ENCODE measurements at regions of chr9 and their contacts with region 1.

Region 1: DNA sequence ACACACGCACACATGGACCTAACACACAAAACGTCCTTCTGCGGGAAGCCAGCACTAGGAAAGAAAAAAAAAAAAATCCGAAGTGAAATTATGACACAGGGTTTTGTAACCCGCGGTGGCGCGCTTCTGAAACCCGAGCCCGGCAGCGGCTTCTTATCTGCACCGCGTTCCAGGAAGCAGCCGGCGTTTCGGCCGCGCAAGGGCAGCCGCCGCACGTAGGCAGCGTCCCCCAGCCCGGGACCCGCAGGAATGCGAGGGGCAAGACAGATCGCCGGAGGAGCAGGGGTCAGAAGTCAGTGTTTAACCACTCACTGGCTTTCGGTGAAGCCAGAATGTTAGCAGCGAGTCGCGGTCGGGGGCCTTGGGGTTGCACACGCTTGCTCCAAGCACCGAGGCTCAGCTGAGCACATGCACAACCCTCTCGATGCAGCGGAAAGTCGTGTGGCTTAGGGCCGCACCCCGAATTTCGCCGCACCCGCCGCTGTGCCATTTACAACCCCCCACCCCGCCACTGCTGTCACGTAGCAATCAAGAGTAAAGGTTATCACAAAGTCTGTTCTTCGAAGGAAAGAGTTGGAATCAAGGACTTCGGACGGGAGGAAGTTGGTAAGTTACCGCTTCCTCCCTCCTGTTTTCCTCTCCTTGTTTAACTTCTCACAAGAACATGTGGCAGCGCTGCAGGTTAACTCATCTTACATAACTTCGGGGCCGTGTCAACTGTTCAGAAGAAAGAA is 167.9 kb downstream of the AUH start:
- DNase-seq: peak; percentile 77
- H3K4me3 Mint-ChIP-seq: peak overlapping the region; percentile 71
- H3K27ac Mint-ChIP-seq: peak overlapping the region; percentile 95
- H3K4me1 Mint-ChIP-seq: peaks cover 80% of the 10 kb centered on the region
- H3K27me3 Mint-ChIP-seq: no peaks in the 10 kb centered on the region

Region 2: DNA sequence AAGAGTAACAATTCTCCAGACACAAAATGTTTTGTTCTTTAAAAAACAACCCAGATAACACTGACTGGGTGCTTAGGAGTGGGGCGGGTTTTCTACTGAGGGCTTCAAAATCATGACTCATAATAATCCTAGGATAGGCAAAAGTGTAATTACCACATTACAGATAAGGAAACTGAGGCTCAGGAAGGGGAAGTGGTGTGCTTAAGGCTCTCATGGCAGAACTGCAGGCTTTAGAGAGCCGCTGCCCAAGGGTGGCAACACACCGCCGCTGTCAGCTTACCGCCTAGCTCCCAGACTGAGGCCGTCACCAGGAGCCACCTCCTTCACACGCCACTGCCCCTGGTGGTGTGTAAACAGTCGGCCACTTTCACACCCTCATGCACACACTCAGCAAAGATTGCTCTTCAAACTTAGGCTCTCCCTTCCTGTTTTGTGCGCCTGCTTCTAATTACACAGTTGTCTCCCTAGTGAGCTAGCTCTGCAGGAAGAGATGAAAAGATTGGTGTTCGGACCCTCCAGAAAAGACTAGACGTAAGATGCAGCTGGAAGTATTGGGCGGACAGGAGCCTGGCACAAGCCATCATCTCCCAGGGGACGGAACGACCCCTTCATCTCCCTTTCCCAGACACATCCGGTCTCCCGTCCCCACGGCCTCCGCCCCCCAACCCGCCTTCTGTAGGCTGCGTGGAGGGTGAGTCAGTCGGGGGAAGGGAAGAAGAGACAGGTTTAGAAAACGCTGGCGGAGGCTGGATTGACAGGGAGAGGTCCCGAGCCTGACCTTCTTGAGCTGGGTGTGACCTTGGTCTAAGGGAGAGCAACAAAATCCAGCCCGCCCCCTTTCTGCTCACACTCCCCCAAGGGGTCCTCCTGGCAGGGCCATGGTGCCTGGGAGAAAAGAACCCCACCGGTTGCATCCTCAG is 229.5 kb before region 1 on chr9:
- intact Hi-C with region 1: loop called (anchors 1 kb)
- DNase-seq: no peak
- H3K4me3 Mint-ChIP-seq: no peak overlapping the region
- H3K27ac Mint-ChIP-seq: no peak overlapping the region
- H3K4me1 Mint-ChIP-seq: peaks cover 46% of the 10 kb centered on the region
- H3K27me3 Mint-ChIP-seq: peaks cover 9% of the 10 kb centered on the region

Region 3: GRCh38 chr9:91089405-91090129 is 104.3 kb before region 1 on chr9:
- intact Hi-C with region 1: loop called (anchors 5 kb)
- DNase-seq: no peak
- H3K4me3 Mint-ChIP-seq: no peak overlapping the region
- H3K27ac Mint-ChIP-seq: peak overlapping the region; percentile 71
- H3K4me1 Mint-ChIP-seq: peaks cover 54% of the 10 kb centered on the region
- H3K27me3 Mint-ChIP-seq: no peaks in the 10 kb centered on the region

Region 4: GRCh38 chr9:91164724-91165520 is 28.9 kb before region 1 on chr9:
- intact Hi-C with region 1: loop called (anchors 1 kb)
- DNase-seq: peak; percentile 74
- H3K4me3 Mint-ChIP-seq: peak overlapping the region; percentile 82
- H3K27ac Mint-ChIP-seq: peak overlapping the region; percentile 98
- H3K4me1 Mint-ChIP-seq: peaks cover 62% of the 10 kb centered on the region
- H3K27me3 Mint-ChIP-seq: no peaks in the 10 kb centered on the region

Region 5: DNA sequence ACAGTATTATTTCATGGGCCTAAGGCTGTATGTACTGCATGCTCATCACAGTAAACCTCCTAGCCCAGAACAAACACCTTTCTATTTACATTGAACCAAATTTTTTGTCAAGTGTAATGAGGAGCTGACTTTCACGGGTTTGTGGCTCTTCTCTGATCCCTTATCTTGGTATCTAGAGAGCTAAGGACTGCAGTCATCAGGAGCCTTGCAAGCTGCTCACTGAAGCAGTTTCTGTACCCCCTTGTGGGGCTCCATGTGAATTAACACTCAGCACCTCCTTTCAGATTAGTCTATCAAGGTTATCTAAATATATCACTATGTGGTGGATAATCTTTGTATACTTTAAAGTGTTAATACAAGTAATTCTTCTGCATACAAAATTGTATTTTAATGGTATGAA is 59.7 kb after region 1 on chr9:
- intact Hi-C with region 1: loop called (anchors 1 kb)
- DNase-seq: peak; percentile 51
- H3K4me3 Mint-ChIP-seq: no peak overlapping the region
- H3K27ac Mint-ChIP-seq: no peak overlapping the region
- H3K4me1 Mint-ChIP-seq: peaks cover 62% of the 10 kb centered on the region
- H3K27me3 Mint-ChIP-seq: no peaks in the 10 kb centered on the region

Region 6: GRCh38 chr9:91422758-91423711 is 229.2 kb after region 1 on chr9:
- intact Hi-C with region 1: loop called (anchors 1 kb)
- DNase-seq: peak; percentile 51
- H3K4me3 Mint-ChIP-seq: peak overlapping the region; percentile 98
- H3K27ac Mint-ChIP-seq: peak overlapping the region; percentile 96
- H3K4me1 Mint-ChIP-seq: peaks cover 63% of the 10 kb centered on the region
- H3K27me3 Mint-ChIP-seq: peaks cover 1% of the 10 kb centered on the region